ENCODE measurements at regions of chr5 and their contacts with region 1.

Region 1: DNA sequence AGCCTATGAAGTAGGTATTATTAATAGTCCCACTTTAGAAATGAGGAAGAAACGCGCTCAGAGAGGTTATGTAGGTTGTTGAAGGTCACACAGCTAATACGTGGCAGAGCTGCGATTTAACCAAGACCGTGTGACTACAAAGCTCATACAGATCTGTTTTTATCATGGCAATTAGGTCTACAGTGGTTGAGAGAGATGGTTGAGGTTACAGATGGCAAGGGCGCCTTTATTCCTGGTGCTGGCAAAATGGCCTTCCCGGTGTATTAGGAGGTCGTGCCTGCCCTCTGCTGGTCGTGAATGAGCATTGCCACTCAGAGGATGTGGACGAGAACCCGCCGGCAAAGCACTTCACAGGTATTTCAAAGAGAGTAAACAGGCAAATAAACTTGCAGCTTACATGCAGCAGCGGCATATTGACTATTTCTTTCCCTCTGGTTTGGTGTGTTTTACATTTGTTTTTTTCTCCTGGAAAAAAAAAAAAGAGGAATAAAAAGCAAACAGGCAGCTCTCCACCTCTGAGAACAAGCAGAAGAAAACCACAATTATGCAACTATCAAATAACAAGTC is 65.3 kb upstream of the EGFLAM start:
- DNase-seq: peak; percentile 71
- ATAC-seq: peak; percentile 82

Region 2: GRCh38 chr5:37717613-37718431 is 475.3 kb before region 1 on chr5:
- intact Hi-C with region 1: no loop called
- DNase-seq: no peak
- ATAC-seq: peak; percentile 56

Region 3: DNA sequence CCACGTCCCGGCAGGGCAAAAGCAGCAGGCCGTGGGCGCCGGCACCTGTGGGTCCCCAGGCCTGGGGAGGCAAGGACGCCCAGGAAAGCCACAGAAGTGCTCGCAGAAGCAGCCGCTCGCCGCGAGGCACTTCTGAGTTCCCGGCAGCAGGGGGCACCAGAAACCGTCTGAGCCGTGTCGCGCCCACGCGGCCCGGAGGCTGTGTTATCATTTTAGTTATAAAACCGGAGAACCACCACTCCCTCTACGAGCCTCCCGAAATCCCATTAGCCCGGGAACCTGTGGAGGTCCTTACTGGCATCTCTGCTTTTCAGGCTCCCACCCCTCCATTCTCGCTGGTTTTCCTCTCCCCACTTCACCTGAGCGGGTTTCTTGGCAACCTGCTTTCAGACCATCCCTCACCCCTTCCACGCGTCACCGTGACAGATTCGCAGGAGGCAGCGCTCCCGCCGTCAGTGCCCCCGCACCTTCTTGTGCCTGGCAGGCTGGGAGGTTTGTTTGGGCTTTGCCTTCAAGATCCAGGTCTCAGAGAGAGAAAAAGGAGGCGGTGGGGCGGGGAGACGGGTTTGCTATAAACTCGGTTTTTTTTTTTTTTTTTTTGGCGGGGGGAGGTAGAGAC is 355.6 kb before region 1 on chr5:
- intact Hi-C with region 1: loop called (anchors 2 kb)
- DNase-seq: peak; percentile 85
- ATAC-seq: peak; percentile 89

Region 4: GRCh38 chr5:38023799-38024198 is 169.3 kb before region 1 on chr5:
- intact Hi-C with region 1: loop called (anchors 10 kb)
- DNase-seq: no peak
- ATAC-seq: no peak

Region 5: GRCh38 chr5:38404667-38405276 is 211.7 kb after region 1 on chr5:
- intact Hi-C with region 1: no loop called
- DNase-seq: no peak
- ATAC-seq: no peak